Right cardiac atrium (tissue), 5 donors: ENCODE measurements at regions of chr3 and their contacts with region 1.

Region 1: GRCh38 chr3:73100741-73101559 is 39.5 kb downstream of the EBLN2 start:
- DNase-seq: peak; percentile 80 to 89 (median 81)
- ATAC-seq: peak; percentile 85 to 87
- H3K4me3 ChIP-seq: no peak overlapping the region
- H3K27ac ChIP-seq: no peak overlapping the region
- H3K4me1 ChIP-seq: no peaks in the 10 kb centered on the region
- H3K27me3 ChIP-seq: no peaks in the 10 kb centered on the region

Region 2: DNA sequence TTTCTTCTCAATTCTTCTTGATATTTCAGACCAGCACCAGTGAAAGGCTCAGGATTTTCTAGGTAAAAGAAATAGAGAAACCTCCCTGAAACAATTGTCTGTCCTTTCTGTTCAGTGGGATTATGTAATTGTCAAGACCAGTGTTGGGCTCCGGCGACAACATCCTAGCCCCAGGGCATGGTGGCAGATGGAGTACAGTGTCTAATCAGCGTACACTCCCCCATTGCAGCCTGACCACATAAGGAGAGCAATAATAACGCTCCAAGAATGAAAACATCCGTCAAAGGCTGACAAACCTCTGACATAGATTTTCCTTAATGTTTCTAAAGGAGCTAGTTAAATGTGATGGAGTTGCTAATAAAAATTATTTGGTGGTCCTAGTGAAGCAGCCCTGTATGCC is 105.1 kb after region 1 on chr3:
- intact Hi-C with region 1: loop called in 1 of 4 experiments (anchors 10 kb)
- DNase-seq: no peak
- ATAC-seq: no peak
- H3K4me3 ChIP-seq: no peak overlapping the region
- H3K27ac ChIP-seq: no peak overlapping the region
- H3K4me1 ChIP-seq: peaks cover 3% of the 10 kb centered on the region
- H3K27me3 ChIP-seq: no peaks in the 10 kb centered on the region

Region 3: DNA sequence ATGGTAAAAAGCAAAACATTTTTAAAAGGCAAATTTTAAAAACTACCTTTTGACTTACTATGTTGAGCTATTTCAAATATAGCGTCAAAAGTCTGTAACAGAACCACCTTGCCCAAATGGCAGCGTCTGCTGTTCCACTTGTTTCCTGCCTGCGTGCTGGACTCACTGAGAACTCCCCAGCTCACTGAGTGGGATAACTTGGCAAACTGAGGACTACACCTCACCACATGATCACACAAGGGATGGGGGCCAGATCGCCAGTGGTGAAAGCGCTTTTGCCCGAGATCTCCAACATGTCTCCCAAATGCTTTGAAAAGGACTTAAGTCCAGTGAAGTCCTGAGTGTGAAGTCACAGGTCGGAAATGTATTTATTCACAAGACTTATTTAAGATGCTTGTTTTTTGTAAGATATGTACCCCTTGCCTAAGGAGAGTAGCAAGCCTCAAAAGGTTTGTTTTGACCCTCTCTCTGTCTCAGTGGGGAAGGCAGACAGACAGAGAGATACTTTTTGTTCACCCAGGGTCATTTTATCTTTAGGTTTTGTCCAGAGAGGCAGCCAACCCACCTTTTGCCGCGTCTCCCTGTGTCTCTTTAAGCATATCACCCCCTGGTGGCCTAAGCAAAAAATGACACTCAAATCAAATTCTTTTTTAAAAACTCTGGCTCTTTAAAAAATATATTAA is 331.2 kb after region 1 on chr3:
- intact Hi-C with region 1: loop called (anchors 5 to 10 kb)
- DNase-seq: peak in 1 of 3 donors; percentile 65
- ATAC-seq: peak; percentile 29 to 39
- H3K4me3 ChIP-seq: no peak overlapping the region
- H3K27ac ChIP-seq: no peak overlapping the region
- H3K4me1 ChIP-seq: peaks cover 3% of the 10 kb centered on the region
- H3K27me3 ChIP-seq: no peaks in the 10 kb centered on the region

Region 4: DNA sequence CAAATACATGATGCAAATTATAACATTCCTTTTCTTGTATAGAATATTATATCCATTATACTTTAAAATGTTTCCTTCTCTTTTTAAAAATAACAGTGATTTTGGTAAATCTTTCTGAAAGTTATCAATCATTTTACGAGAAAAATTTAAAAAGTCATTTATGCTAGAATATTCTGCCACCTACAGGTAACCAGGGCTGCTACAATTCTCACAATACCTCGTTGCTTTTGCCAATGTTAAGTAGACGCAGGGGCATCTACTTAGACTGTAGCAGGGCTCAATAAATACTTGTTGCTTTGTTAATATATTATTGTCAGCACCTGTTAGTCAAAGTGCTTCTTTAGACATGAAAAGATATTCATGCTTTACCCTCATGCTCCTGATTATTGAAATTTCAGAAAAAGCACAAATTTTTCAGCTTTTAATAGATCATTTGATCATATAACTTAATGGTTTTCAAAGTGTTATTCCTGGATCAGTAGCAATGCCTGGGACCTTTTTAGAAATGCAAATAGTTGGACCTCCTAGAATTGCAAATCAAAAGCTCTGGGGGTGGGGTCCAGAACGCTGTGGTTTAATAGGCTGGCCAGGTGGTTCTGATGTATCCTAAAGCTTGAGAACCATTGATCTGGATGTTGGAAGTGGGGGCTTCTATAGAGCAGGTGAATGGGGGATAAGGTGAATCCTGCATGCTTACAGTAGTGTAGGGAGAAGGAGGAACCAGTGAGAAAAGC is 747.4 kb after region 1 on chr3:
- intact Hi-C with region 1: loop called in 1 of 4 experiments (anchors 5 kb)
- DNase-seq: no peak
- ATAC-seq: peak in 1 of 2 donors; percentile 47
- H3K4me3 ChIP-seq: no peak overlapping the region
- H3K27ac ChIP-seq: no peak overlapping the region
- H3K4me1 ChIP-seq: no peaks in the 10 kb centered on the region
- H3K27me3 ChIP-seq: no peaks in the 10 kb centered on the region